Activated CD4-positive, alpha-beta T cell treated with anti-CD3 and anti-CD28 coated beads for 36 hours (primary cell): ENCODE measurements at regions of chr4 and their contacts with region 1.

Region 1: DNA sequence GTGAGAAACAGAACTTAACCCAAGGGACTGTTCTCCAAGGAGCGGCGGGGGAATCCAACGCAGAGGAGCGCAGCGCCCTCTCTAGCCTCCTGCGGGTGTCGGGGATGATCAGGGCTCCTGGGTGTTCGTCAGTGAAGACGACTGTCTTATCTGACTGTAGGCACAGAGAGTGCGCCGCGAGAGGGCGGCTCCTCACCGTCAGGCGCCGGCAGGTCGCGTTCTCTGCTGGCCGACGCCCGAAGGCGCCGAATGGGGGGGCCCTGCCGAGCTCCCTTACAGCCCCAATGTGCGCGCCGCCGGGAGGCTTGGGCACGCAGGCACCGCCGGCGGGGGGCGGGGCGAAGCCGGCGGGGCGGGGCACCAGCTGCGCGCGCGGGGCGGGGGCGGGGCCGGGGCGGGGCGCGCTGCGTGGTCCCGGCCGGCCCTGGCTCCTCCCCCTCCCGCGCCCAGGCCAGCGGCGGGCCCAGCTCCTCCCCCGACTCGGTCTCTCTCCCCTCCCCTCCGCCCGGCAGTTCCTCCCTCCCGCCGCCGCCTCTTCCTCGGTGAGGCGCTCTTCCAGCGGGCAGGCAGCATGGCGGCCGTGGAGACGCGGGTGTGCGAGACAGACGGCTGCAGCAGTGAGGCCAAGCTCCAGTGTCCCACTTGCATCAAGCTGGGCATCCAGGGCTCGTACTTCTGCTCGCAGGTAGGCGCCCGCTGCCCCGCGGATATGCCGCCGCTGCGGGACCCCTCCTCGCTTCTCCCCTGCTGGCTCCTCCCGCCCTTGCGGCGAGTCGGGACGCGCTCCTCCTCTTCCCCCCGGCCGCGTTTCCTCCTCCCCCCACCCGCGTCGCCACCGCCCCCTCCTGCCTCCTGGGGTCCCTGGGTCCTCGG is at the start of gene METAP1:
- DNase-seq: peak; percentile 98
- ATAC-seq: peak; percentile 91
- H3K4me3 Mint-ChIP-seq: peak within 1 kb of the TSS; percentile 81
- H3K27ac Mint-ChIP-seq: peak within 1 kb of the TSS; percentile 95
- H3K4me1 Mint-ChIP-seq: peaks cover 40% of the 10 kb centered on the region
- H3K27me3 Mint-ChIP-seq: no peaks in the 10 kb centered on the region
- total RNA-seq, gene METAP1: 67.9 to 75.2 TPM

Region 2: DNA sequence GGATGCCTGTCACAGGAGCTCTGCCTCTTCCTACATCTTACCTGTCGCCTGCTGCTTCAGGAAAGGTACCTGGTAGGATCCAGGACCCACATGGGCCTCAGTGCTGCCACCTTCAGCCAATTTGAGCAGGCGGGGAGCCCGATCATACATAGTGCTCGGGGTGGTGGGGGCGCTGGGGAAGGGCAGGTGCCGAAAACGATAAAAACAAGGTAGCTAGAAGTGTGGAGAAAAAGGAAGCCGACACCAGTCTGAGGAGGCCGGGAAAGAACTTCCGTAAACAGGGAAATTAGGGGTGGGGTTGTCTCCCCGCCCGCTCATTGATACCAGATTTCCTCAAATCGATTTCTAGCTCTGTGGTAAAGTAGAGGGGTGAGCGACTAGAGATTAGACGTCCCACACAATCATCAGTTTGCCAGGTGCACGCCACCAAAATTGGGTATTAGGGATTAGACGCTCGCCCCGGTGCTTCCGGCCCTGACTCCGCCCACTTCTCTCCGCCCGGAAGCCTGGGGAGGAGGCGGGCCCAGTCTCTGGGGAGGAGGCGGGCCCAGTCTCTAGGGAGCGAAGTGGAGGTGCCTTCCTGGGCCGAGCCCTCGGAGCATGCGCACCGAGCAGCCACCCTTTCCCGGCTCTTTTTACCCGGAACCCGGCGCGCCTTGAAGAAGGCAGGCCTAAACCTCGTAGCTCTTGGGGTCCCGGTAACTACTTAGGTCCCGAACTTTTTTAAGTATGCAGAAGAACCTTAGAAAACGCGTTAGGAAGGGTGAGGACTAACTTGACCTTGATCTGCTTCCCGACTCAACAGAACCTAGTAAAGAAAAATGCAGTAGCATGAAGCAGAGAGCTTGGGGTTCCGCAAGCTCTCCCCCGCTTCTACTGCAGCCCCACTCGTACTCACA is 852.2 kb before region 1 on chr4 and contains the start of gene STPG2:
- CTCF ChIA-PET with region 1: no interaction called
- POLR2A ChIA-PET with region 1: no interaction called
- intact Hi-C with region 1: loop called (anchors 1 kb)
- DNase-seq: peak; percentile 96
- ATAC-seq: peak; percentile 100
- H3K4me3 Mint-ChIP-seq: peak within 1 kb of the TSS; percentile 96
- H3K27ac Mint-ChIP-seq: peak within 1 kb of the TSS; percentile 99
- H3K4me1 Mint-ChIP-seq: peaks cover 22% of the 10 kb centered on the region
- H3K27me3 Mint-ChIP-seq: no peaks in the 10 kb centered on the region
- total RNA-seq, gene STPG2: 0.14 to 0.25 TPM

Region 3: GRCh38 chr4:98601708-98602107 is 393.7 kb before region 1 on chr4:
- CTCF ChIA-PET with region 1: interaction called, 6 read pairs
- POLR2A ChIA-PET with region 1: no interaction called
- intact Hi-C with region 1: loop called in 1 of 2 experiments (anchors 5 kb)
- DNase-seq: peak; percentile 58
- ATAC-seq: peak; percentile 77
- H3K4me3 Mint-ChIP-seq: peak overlapping the region; percentile 41
- H3K27ac Mint-ChIP-seq: peak overlapping the region; percentile 92
- H3K4me1 Mint-ChIP-seq: peaks cover 52% of the 10 kb centered on the region
- H3K27me3 Mint-ChIP-seq: no peaks in the 10 kb centered on the region

Region 4: GRCh38 chr4:99022566-99022965 is 27.1 kb after region 1 on chr4:
- CTCF ChIA-PET with region 1: interaction called, 3 read pairs
- POLR2A ChIA-PET with region 1: interaction called, 4 read pairs
- intact Hi-C with region 1: loop called in 1 of 2 experiments (anchors 2 kb)
- DNase-seq: no peak
- ATAC-seq: no peak
- H3K4me3 Mint-ChIP-seq: no peak overlapping the region
- H3K27ac Mint-ChIP-seq: no peak overlapping the region
- H3K4me1 Mint-ChIP-seq: peaks cover 44% of the 10 kb centered on the region
- H3K27me3 Mint-ChIP-seq: no peaks in the 10 kb centered on the region

Region 5: GRCh38 chr4:99061048-99061700 is 65.8 kb after region 1 on chr4:
- CTCF ChIA-PET with region 1: interaction called, 91 read pairs
- POLR2A ChIA-PET with region 1: interaction called, 13 read pairs
- intact Hi-C with region 1: loop called (anchors 1 kb)
- DNase-seq: no peak
- ATAC-seq: peak; percentile 33
- H3K4me3 Mint-ChIP-seq: no peak overlapping the region
- H3K27ac Mint-ChIP-seq: peak overlapping the region; percentile 3
- H3K4me1 Mint-ChIP-seq: peaks cover 5% of the 10 kb centered on the region
- H3K27me3 Mint-ChIP-seq: no peaks in the 10 kb centered on the region

Region 6: GRCh38 chr4:99462875-99463464 is 467.6 kb after region 1 on chr4:
- CTCF ChIA-PET with region 1: no interaction called
- POLR2A ChIA-PET with region 1: no interaction called
- intact Hi-C with region 1: loop called in 1 of 2 experiments (anchors 1 kb)
- DNase-seq: peak; percentile 70
- ATAC-seq: peak; percentile 84
- H3K4me3 Mint-ChIP-seq: no peak overlapping the region
- H3K27ac Mint-ChIP-seq: no peak overlapping the region
- H3K4me1 Mint-ChIP-seq: no peaks in the 10 kb centered on the region
- H3K27me3 Mint-ChIP-seq: no peaks in the 10 kb centered on the region

Region 7: DNA sequence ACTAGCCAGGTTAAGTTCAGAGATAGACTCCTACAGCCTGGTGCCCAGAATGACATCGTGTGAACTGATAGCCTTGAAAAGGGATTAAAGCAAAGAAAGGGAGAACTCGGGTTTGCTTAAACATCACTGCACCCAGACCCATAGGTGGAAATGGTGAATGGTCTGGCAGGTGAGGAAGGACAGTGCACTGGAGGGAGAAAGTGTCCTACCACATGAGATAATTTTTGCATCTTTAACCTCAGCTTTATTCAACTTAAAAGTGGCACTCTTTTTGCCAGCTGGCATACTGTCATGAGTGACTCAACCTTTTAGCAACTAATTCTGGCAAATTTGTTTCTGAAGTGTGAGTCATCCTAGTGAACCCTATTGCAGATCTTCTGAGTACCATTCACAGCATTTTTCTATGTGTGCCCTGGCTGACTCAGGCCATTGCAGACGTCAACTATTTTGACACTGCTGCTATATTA is 768.2 kb after region 1 on chr4:
- CTCF ChIA-PET with region 1: no interaction called
- POLR2A ChIA-PET with region 1: no interaction called
- intact Hi-C with region 1: no loop called
- DNase-seq: peak; percentile 53
- ATAC-seq: peak; percentile 96
- H3K4me3 Mint-ChIP-seq: no peak overlapping the region
- H3K27ac Mint-ChIP-seq: no peak overlapping the region
- H3K4me1 Mint-ChIP-seq: peaks cover 34% of the 10 kb centered on the region
- H3K27me3 Mint-ChIP-seq: peaks cover 10% of the 10 kb centered on the region